K562 (cell line): ENCODE measurements at regions of chr17 and their contacts with region 1.

Region 1: DNA sequence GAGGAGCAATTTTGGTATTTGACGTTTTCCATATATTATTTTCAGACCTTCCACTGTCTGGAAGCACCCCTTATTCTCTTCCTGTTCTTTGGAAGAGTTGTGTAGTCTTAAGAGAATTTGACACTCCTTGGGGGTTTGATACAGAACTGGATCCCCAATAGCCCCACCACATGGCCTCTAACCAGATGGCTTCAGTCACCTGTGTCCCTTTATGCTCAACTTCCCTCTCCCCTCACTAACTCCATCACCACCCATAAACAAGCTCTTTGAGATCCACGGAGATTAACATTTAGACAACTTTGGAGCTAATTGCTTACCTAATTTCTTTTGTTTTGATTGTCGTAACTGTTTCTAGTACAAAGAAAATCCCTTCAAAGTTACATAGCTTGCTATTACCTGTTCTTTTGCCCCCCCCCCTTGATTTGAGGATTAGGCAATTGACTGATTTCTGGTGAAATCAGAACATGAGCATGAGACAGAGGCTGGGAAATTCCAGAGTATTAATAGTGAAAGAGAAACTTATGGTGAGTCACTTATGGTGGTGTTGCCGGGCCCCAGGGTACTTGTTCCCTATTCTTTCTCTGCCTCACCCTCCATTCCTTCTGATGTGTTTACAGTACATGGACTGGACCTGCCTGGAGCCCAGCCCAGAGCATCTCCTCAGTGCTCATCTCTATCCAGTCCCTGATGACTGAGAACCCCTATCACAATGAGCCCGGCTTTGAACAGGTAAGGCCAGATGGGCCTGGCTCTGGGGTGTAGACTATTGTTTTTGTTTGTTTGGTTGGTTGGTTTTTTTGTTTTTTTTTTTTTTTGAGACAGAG is 7.5 kb downstream of the UBE2Z start:
- DNase-seq: no peak
- ATAC-seq: no peak
- H3K4me3 ChIP-seq: no peak overlapping the region
- H3K27ac ChIP-seq: no peak overlapping the region
- H3K4me1 ChIP-seq: no peaks in the 10 kb centered on the region; a peak in 1 of 5 replicates
- H3K27me3 ChIP-seq: no peaks in the 10 kb centered on the region
- CTCF ChIP-seq: no peak
- EP300 ChIP-seq: no peak
- POLR2A ChIP-seq: no peak
- RAD21 ChIP-seq: no peak

Region 2: DNA sequence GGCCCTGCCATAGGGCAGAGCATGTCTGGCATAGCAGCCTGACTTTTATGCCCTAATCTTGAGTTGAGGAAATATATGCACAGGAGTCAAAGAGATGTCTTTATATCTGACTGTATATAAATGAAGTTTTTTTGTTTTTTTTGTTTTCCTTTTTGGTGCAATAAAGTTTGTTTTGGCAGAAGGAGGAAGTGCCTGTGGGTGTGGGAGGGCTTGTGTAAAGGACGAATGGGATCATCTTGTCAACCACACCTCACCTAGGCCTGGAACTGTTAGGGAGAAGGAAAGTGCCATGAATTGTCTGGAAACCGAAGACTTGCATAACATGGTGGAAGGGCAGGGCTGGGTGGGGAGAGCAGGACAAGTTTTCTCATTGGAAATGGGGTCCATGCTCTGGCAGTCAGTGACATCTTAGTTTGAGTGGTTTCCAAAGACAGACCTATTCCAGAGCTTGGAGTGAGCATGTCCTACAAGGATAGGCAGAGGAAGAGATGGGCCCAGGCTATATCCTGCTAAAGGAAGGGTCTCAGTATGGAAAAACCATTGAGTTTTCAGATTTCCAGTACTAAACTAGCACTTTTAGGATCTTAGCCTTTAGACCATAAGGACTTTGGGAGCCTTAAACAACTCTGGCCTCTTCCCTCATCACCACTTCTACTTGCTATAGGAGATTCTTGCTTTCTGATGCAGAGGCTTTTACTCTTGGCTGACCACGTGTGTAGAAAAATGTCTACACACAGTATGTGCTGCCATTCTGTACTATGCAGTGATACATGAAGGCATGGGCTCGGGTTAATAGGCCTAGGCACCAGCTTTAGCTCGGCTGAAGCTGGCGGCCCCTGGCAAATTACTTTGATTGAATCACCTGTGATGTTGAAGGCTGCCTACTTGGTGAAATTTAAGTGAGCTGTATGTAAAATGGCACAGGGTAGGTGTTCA is 13.5 kb after region 1 on chr17:
- CTCF ChIA-PET with region 1: no interaction called
- POLR2A ChIA-PET with region 1: interaction called, 14 read pairs
- in situ Hi-C with region 1: no loop called
- intact Hi-C with region 1: no loop called
- DNase-seq: no peak
- ATAC-seq: peak; percentile 39
- H3K4me3 ChIP-seq: no peak overlapping the region
- H3K27ac ChIP-seq: no peak overlapping the region
- H3K4me1 ChIP-seq: no peaks in the 10 kb centered on the region; a peak in 1 of 5 replicates
- H3K27me3 ChIP-seq: no peaks in the 10 kb centered on the region
- CTCF ChIP-seq: no peak
- EP300 ChIP-seq: no peak
- POLR2A ChIP-seq: peak; percentile 63
- RAD21 ChIP-seq: no peak